Activated CD4-positive, alpha-beta memory T cell treated with anti-CD3 and anti-CD28 coated beads for 36 hours (primary cell): ENCODE measurements at regions of chr5 and their contacts with region 1.

Region 1: GRCh38 chr5:176660860-176661641 is 13.8 kb downstream of the TSPAN17 start:
- DNase-seq: peak; percentile 85
- H3K4me3 Mint-ChIP-seq: no peak overlapping the region
- H3K27ac Mint-ChIP-seq: no peak overlapping the region
- H3K4me1 Mint-ChIP-seq: peaks cover 27% of the 10 kb centered on the region
- H3K27me3 Mint-ChIP-seq: peaks cover 8% of the 10 kb centered on the region

Region 2: DNA sequence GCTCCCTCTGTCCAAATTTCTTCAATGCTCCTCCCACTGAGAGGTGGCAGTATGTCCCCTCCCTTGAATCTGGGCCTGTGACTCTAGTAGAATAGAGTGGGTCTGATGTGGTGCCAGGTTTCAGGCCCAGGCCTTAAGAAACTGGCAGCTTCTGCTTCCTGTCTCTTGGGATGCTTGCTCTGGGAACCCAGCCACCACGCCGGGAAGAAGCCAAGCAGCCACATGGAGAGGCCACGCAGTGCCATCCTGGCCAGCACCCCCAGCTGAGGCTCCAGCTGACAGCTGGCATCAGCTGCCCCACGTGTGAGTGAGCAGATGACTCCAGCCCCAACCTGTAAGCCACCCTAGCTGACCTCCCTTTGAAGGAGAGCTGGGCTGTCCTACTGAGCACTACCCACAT is 21.1 kb before region 1 on chr5:
- CTCF ChIA-PET with region 1: interaction called, 65 read pairs
- POLR2A ChIA-PET with region 1: no interaction called
- intact Hi-C with region 1: no loop called
- DNase-seq: no peak
- H3K4me3 Mint-ChIP-seq: no peak overlapping the region
- H3K27ac Mint-ChIP-seq: no peak overlapping the region
- H3K4me1 Mint-ChIP-seq: no peaks in the 10 kb centered on the region
- H3K27me3 Mint-ChIP-seq: peaks cover 7% of the 10 kb centered on the region

Region 3: GRCh38 chr5:176744584-176744965 is 83.5 kb after region 1 on chr5:
- CTCF ChIA-PET with region 1: interaction called, 27 read pairs
- POLR2A ChIA-PET with region 1: no interaction called
- intact Hi-C with region 1: no loop called
- DNase-seq: no peak
- H3K4me3 Mint-ChIP-seq: no peak overlapping the region
- H3K27ac Mint-ChIP-seq: no peak overlapping the region
- H3K4me1 Mint-ChIP-seq: peaks cover 29% of the 10 kb centered on the region
- H3K27me3 Mint-ChIP-seq: peaks cover 64% of the 10 kb centered on the region

Region 4: GRCh38 chr5:176908675-176909368 is 247.8 kb after region 1 on chr5:
- CTCF ChIA-PET with region 1: interaction called, 20 read pairs
- POLR2A ChIA-PET with region 1: no interaction called
- intact Hi-C with region 1: no loop called
- DNase-seq: no peak
- H3K4me3 Mint-ChIP-seq: no peak overlapping the region
- H3K27ac Mint-ChIP-seq: no peak overlapping the region
- H3K4me1 Mint-ChIP-seq: peaks cover 17% of the 10 kb centered on the region
- H3K27me3 Mint-ChIP-seq: no peaks in the 10 kb centered on the region

Region 5: DNA sequence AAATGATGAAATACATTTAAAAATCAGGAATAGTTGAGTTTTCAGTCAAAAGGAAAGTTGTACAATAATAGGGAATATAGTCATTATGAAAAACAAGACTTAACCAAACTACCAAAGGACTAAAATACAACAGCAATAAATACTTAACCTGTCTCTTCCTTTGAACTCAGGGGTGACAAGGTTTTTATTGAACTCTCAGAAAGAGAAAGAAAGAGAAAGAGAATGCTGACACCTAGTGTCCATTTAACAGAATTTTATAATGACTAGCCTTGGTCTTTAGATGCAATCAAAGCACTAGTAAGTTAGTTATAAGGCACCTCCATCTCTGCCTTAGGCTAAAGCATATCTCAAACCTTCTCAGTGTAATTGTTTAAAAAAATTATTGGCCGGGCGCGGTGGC is 298.0 kb after region 1 on chr5:
- CTCF ChIA-PET with region 1: interaction called, 23 read pairs
- POLR2A ChIA-PET with region 1: no interaction called
- intact Hi-C with region 1: loop called (anchors 2 kb)
- DNase-seq: no peak
- H3K4me3 Mint-ChIP-seq: no peak overlapping the region
- H3K27ac Mint-ChIP-seq: no peak overlapping the region
- H3K4me1 Mint-ChIP-seq: no peaks in the 10 kb centered on the region
- H3K27me3 Mint-ChIP-seq: no peaks in the 10 kb centered on the region

Region 6: GRCh38 chr5:177113566-177114424 is 452.7 kb after region 1 on chr5:
- CTCF ChIA-PET with region 1: interaction called, 56 read pairs
- POLR2A ChIA-PET with region 1: no interaction called
- intact Hi-C with region 1: loop called (anchors 5 kb)
- DNase-seq: peak; percentile 89
- H3K4me3 Mint-ChIP-seq: no peak overlapping the region
- H3K27ac Mint-ChIP-seq: no peak overlapping the region
- H3K4me1 Mint-ChIP-seq: peaks cover 21% of the 10 kb centered on the region
- H3K27me3 Mint-ChIP-seq: no peaks in the 10 kb centered on the region

Region 7: DNA sequence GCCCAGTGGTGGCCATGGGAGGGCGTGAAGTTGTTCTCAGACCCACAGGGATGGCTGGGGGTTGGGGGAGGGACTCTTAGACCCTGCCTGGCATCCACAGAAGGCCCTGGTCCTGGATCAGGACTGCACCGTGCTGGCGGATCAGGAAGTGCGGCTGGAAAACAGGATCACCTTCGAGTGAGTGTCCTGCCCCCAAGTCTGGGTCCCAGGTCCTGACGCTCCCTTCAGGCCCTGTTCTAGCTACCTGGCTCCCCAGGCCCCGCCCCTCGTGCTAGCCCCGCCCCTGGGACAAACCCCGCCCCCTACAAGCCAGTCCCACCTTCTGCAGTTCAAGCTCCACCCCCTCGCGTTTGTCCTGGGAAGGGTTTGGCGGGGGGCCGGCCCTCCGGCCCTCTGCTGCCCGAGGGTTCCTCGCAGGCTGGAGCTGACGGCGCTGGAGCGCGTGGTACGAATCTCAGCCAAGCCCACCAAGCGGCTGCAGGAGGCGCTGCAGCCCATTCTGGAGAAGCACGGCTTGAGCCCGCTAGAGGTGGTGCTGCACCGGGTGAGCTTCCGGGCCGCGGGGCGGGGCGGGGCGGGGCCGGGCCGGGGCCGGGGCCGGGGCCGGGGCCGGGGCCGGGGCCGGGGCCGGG is 709.6 kb after region 1 on chr5:
- CTCF ChIA-PET with region 1: no interaction called
- POLR2A ChIA-PET with region 1: no interaction called
- intact Hi-C with region 1: no loop called
- DNase-seq: peak; percentile 79
- H3K4me3 Mint-ChIP-seq: peak overlapping the region; percentile 74
- H3K27ac Mint-ChIP-seq: peak overlapping the region; percentile 38
- H3K4me1 Mint-ChIP-seq: peaks cover 65% of the 10 kb centered on the region
- H3K27me3 Mint-ChIP-seq: no peaks in the 10 kb centered on the region